ENCODE measurements at regions of chr3 and their contacts with region 1.

Region 1: GRCh38 chr3:10115326-10116137 is at the start of gene BRK1:
- DNase-seq: peak; percentile 97
- H3K4me3 Mint-ChIP-seq: peak within 1 kb of the TSS; percentile 94
- H3K27ac Mint-ChIP-seq: peak within 1 kb of the TSS; percentile 94
- H3K4me1 Mint-ChIP-seq: peaks cover 7% of the 10 kb centered on the region
- H3K27me3 Mint-ChIP-seq: no peaks in the 10 kb centered on the region
- CTCF ChIP-seq: no peak
- total RNA-seq, gene BRK1: 78.5 and 82.5 TPM in 2 replicates

Region 2: GRCh38 chr3:10008588-10009344 is 106.8 kb before region 1 on chr3:
- CTCF ChIA-PET with region 1: no interaction called
- POLR2A ChIA-PET with region 1: no interaction called
- intact Hi-C with region 1: no loop called
- DNase-seq: peak; percentile 77
- H3K4me3 Mint-ChIP-seq: peak overlapping the region; percentile 66
- H3K27ac Mint-ChIP-seq: no peak overlapping the region
- H3K4me1 Mint-ChIP-seq: peaks cover 8% of the 10 kb centered on the region
- H3K27me3 Mint-ChIP-seq: no peaks in the 10 kb centered on the region
- CTCF ChIP-seq: no peak

Region 3: DNA sequence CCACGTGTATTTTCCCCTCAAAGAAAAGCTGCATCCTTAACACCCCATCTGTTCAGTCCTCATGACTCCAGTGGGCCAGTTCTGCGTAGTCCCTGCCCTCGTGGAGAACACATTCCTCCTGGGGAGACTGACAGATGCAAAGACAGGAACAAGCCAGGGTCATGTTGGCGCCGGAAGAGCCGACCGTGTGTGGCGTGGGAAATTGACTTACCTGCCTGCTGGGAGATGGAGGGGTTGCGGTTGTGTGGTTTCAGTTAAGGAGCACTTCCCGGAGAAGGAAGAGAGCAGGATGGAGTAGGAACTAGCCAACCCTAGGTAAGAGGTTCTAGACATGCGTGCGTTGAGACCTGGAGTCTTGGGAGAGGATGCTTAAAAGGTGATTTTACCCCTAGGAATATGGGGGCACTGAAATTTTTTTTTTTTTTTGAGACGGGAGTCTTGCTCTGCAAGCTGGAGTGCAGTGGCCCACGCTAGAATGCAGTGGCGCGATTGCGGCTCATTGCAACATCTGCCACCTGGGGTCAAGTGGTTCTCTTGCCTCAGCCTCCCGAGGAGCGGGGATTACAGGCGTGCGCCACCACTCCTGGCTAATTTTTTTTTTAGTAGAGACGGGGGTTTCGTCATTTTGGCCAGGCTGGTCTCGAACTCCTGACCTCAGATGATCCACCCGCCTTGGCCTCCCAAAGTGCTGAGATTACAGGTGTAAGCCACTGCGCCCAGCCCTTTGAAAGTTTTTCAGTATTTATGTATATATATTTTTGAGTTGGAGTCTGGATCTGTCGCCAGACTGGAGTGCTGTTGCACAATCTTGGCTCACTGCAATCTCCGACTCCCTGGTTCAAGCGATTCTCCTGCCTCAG is 27.4 kb after region 1 on chr3:
- CTCF ChIA-PET with region 1: no interaction called
- POLR2A ChIA-PET with region 1: interaction called, 10 read pairs
- intact Hi-C with region 1: no loop called
- DNase-seq: peak; percentile 38
- H3K4me3 Mint-ChIP-seq: peak overlapping the region; percentile 86
- H3K27ac Mint-ChIP-seq: peak overlapping the region; percentile 92
- H3K4me1 Mint-ChIP-seq: peaks cover 6% of the 10 kb centered on the region
- H3K27me3 Mint-ChIP-seq: no peaks in the 10 kb centered on the region
- CTCF ChIP-seq: no peak

Measured in MCF 10A (cell line).